ENCODE measurements at regions of chr19 and their contacts with region 1.

Region 1: GRCh38 chr19:43651758-43652545 is 12.3 kb upstream of the CADM4 start:
- DNase-seq: peak; percentile 65
- ATAC-seq: peak; percentile 95
- H3K4me3 ChIP-seq: no peak overlapping the region
- H3K27ac ChIP-seq: no peak overlapping the region
- H3K4me1 ChIP-seq: no peaks in the 10 kb centered on the region
- H3K27me3 ChIP-seq: no peaks in the 10 kb centered on the region
- CTCF ChIP-seq: peak; percentile 67
- POLR2A ChIP-seq: no peak
- RAD21 ChIP-seq: peak; percentile 62

Region 2: GRCh38 chr19:42512743-42513304 is 1139.1 kb before region 1 on chr19:
- CTCF ChIA-PET with region 1: no interaction called
- POLR2A ChIA-PET with region 1: interaction called, 13 read pairs
- dilution Hi-C with region 1: no loop called
- in situ Hi-C with region 1: no loop called
- intact Hi-C with region 1: no loop called
- DNase-seq: no peak
- ATAC-seq: no peak
- H3K4me3 ChIP-seq: no peak overlapping the region
- H3K27ac ChIP-seq: no peak overlapping the region
- H3K4me1 ChIP-seq: no peaks in the 10 kb centered on the region
- H3K27me3 ChIP-seq: peaks cover 18% of the 10 kb centered on the region
- CTCF ChIP-seq: no peak
- POLR2A ChIP-seq: no peak
- RAD21 ChIP-seq: no peak

Region 3: DNA sequence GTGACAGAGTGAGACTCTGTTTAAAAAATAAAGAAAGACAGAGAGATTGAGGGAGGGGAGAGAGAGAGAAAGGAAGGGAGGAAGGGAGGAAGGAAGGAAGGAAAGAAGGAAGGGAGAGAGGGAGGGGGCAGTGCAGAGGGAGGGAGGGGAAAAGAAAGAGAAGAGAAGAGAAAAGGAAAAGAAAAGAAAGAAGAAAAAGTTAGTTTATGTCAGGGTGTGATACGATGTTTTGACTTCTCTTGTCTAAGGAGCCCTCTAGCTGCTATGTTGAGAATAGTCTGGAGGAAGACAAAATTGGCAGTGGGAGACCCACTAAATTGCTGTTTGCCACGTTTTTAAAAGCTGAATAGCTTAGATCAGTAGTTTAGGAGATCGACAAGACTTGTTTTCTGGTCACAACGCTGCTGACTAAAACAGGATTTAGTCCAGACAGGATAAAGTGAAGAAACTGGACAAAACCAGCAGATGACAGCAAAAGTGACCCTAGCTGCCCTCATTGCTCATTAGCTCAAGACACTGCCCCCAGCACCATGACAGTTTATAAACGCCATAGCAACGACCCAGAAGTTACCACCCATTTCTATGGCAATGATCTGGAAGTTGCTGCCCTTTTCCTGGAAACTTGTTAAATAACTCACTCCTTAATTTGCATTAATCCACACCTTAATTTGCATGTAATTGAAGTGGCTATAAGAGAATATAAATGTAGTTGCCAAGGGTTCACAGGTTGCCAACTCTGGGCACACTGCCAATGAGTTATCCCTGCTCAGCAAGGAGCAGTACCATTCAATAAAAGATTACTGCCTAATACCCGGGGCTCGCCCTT is 226.2 kb before region 1 on chr19:
- CTCF ChIA-PET with region 1: no interaction called
- POLR2A ChIA-PET with region 1: no interaction called
- dilution Hi-C with region 1: no loop called
- in situ Hi-C with region 1: no loop called
- intact Hi-C with region 1: loop called (anchors 5 kb)
- DNase-seq: peak; percentile 18
- ATAC-seq: peak; percentile 79
- H3K4me3 ChIP-seq: no peak overlapping the region
- H3K27ac ChIP-seq: no peak overlapping the region
- H3K4me1 ChIP-seq: no peaks in the 10 kb centered on the region
- H3K27me3 ChIP-seq: peaks cover 5% of the 10 kb centered on the region
- CTCF ChIP-seq: peak; percentile 51
- POLR2A ChIP-seq: no peak
- RAD21 ChIP-seq: peak; percentile 42

Region 4: DNA sequence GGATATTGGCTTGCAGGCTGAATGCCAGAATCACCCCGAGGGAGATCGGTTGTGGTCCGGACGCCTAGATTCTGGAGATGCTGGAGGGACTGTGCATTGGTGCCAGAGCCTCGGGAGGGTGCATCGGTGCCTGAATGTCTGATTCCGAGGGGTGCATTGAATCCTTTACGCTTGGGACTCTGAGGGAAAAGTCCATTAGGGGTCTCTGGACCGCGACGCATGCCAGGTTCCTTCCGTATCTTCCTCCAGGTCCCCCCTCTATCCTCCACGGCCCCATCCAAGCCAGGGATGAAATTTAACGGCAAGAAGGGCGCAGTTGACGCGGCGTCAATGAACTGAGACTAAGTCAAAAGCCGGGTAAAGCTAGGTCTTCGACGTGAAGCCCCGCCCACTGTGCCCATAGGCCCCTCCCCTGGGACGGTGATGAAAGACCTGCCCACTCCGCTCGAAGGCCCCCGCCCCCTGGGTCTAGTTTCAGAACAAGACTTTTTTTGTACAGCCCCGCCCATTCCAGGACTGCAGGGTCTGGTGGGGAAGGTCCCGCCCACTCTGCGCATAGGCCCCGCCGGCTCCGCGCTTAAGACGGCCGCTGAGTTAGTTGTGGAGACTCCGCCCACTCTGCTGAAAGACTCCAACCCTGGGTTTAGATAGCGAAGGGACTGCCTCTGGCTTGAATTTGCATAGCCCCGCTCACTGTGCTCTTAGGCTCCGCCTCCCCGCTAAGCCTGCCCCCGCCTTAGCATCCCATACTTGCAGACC is 118.2 kb before region 1 on chr19:
- CTCF ChIA-PET with region 1: no interaction called
- POLR2A ChIA-PET with region 1: no interaction called
- dilution Hi-C with region 1: no loop called
- in situ Hi-C with region 1: no loop called
- intact Hi-C with region 1: loop called (anchors 5 kb)
- DNase-seq: peak; percentile 99
- ATAC-seq: peak; percentile 91
- H3K4me3 ChIP-seq: peak overlapping the region; percentile 55
- H3K27ac ChIP-seq: peak overlapping the region; percentile 42
- H3K4me1 ChIP-seq: peaks cover 3% of the 10 kb centered on the region; the same call in 1 of the 2 replicates
- H3K27me3 ChIP-seq: no peaks in the 10 kb centered on the region
- CTCF ChIP-seq: no peak
- POLR2A ChIP-seq: no peak
- RAD21 ChIP-seq: no peak

Region 5: GRCh38 chr19:43555185-43555770 is 96.7 kb before region 1 on chr19:
- CTCF ChIA-PET with region 1: no interaction called
- POLR2A ChIA-PET with region 1: no interaction called
- dilution Hi-C with region 1: no loop called
- in situ Hi-C with region 1: loop called (anchors 5 kb)
- intact Hi-C with region 1: no loop called
- DNase-seq: peak; percentile 66
- ATAC-seq: peak; percentile 91
- H3K4me3 ChIP-seq: no peak overlapping the region
- H3K27ac ChIP-seq: no peak overlapping the region
- H3K4me1 ChIP-seq: peaks cover 2% of the 10 kb centered on the region; the same call in 1 of the 2 replicates
- H3K27me3 ChIP-seq: no peaks in the 10 kb centered on the region
- CTCF ChIP-seq: peak; percentile 73
- POLR2A ChIP-seq: no peak
- RAD21 ChIP-seq: peak; percentile 72

Measured in IMR-90 (cell line).